Dendritic cell treated with granulocyte-macrophage colony-stimulating factor and Interleukin-4, amounts not matched to agents 40 ng/mL and 50 ng/mL, for 4 days (primary cell): ENCODE measurements at regions of chr7 and their contacts with region 1.

Region 1: GRCh38 chr7:140175221-140176121 is 1.3 kb downstream of the KDM7A start:
- H3K4me3 Mint-ChIP-seq: peak overlapping the region; percentile 76
- H3K27ac Mint-ChIP-seq: peak overlapping the region; percentile 99
- H3K4me1 Mint-ChIP-seq: peaks cover 56% of the 10 kb centered on the region
- H3K27me3 Mint-ChIP-seq: peaks cover 14% of the 10 kb centered on the region

Region 2: GRCh38 chr7:139886206-139886605 is 289.3 kb before region 1 on chr7:
- intact Hi-C with region 1: no loop called
- H3K4me3 Mint-ChIP-seq: no peak overlapping the region
- H3K27ac Mint-ChIP-seq: no peak overlapping the region
- H3K4me1 Mint-ChIP-seq: peaks cover 76% of the 10 kb centered on the region
- H3K27me3 Mint-ChIP-seq: no peaks in the 10 kb centered on the region

Region 3: DNA sequence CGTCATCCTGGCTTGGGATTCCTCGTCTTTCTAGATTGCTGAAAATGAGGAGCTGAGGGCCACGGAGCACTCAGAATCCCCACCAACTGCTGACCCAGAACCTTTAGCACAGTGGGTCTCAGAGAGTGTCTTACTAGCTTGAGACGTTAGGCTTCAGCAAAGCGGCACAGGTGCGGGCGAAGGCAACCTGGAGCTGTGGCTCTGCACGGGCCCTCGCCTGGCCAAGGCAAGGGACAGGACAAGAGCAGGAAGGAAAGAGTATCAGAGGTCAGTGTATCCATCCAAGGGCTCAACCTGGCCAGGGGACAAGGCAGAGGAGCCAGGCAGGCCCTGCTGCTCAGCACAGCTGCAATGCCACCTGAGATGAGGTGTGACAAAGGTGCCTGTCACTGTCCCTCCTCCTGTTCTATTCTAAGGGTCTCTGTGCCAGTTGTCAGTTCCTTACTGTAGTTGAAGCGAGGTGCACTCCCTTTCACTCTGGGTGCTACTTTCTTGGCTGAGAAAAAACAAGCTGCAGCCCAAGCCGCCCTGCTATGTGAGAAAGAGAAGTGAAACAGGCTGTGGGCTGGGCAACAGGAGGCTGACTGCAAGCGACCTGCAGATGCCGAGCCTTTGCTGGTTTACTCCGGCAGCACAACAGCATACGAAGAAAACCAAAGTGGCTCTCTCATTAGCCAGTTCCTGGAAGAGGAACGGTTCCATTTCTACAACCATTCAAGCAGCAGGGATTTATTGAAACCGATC is 34.6 kb after region 1 on chr7:
- intact Hi-C with region 1: loop called (anchors 2 kb)
- H3K4me3 Mint-ChIP-seq: peak overlapping the region; percentile 62
- H3K27ac Mint-ChIP-seq: peak overlapping the region; percentile 99
- H3K4me1 Mint-ChIP-seq: peaks cover 84% of the 10 kb centered on the region
- H3K27me3 Mint-ChIP-seq: peaks cover 5% of the 10 kb centered on the region

Region 4: DNA sequence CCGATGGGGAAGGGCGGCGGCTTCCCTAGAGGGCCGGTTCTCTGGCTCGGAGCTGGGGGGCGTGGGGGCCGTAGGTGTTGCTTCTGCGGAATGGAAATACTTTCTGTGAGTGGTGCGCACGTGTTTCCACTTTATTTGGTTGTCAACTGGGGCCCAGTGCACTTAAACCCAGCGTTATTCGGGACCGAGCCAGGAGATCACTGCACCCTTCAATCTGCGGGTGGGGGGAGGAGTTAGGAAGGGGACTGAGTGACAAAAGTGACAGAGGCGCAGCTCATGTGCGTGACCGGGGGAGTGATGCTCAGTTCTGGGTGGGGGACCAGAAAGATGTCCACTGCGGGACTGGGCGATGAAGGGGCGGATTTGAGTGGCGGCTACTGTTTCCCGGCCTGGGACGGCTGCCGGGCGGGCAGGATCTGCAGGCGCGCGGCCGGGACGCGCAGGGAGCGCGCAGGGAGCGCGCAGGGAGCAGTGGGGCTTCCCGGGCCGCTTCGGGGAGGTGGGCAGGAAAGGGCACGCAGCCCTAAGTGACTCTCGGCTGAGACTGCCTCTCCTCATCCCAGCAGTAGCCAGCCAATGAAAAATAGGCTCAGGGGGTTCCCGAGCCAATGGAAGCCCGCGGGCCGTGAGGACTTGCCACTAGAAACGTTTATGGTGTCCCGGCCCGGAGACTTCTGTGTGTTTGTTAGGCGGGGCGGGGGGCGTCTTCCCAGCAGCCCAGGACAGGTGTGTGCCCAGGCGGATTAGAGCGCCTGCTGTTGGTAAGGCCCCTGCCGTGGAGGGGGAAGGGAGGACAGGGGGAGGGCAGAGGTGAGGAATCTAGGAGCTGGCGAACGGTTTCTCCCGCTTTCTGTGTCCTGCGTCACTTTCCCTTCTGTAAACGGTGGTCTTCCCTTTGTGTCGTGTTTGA is 55.6 kb after region 1 on chr7:
- intact Hi-C with region 1: loop called (anchors 1 kb)
- H3K4me3 Mint-ChIP-seq: peak overlapping the region; percentile 95
- H3K27ac Mint-ChIP-seq: peak overlapping the region; percentile 97
- H3K4me1 Mint-ChIP-seq: peaks cover 56% of the 10 kb centered on the region
- H3K27me3 Mint-ChIP-seq: peaks cover 6% of the 10 kb centered on the region

Region 5: DNA sequence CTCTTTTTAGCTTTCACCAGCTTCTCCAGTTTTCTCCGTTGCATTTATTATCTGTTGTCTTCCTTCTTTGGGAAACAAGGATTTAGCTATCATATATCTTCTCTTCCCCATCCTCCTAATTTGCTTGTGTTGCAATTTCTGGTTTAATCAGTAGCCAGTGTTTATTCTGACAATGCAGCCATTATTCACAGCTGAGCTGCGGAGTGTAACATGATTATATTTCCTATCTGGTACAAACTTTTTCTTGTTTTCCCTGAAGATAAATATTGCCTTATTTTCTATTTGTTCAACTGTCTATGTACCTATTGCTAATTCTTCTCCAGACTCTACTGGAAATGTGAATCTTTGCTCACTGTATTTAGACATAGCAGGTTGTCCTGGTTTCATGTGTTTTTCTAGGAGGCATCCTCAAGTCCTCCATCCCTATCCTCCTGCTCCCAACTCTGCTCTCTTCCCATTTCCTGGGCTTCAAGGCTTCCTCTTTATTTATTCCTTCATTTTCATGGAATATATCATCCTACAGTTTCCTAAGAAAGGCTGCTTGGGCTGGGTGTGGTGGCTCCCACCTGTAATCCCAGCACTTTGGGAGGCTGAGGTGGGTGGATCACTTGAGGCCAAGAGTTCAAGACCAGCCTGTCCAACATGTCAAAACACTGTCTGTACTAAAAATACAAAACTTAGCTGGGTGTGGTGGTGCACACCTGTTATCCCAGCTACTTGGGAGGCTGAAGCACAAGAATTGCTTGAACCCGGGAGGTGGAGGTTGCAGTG is 73.8 kb after region 1 on chr7:
- intact Hi-C with region 1: loop called (anchors 1 kb)
- H3K4me3 Mint-ChIP-seq: no peak overlapping the region
- H3K27ac Mint-ChIP-seq: peak overlapping the region; percentile 95
- H3K4me1 Mint-ChIP-seq: peaks cover 64% of the 10 kb centered on the region
- H3K27me3 Mint-ChIP-seq: no peaks in the 10 kb centered on the region

Region 6: DNA sequence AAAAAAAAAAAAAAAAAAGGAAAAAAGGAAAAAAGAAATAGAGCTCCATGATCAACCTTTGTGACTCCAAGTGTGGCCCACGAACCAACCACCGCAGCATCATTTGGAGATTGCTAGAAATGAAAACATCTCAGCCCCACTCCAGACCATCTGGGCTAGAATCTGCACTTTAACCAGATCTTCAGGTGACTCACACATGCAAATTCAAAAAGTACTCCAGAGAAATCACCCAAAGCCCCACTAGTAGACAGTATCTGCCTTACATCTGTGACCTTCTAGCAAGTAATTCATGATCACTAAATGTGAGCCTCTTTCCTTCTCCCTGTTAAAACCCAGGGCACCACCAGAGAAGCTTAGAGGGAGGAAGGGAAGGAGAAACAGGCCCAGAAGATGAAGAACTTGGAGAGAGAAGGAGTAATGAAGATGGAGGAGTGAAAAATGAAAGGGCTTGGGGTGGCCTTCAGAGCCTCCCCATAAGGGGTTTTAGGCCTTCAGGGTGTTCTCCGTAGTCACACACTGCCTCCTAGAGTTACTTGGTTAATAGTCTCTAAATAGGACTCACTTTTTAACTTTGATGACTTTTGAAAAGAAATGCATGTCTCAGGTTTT is 128.8 kb after region 1 on chr7:
- intact Hi-C with region 1: loop called (anchors 5 kb)
- H3K4me3 Mint-ChIP-seq: peak overlapping the region; percentile 27
- H3K27ac Mint-ChIP-seq: peak overlapping the region; percentile 84
- H3K4me1 Mint-ChIP-seq: peaks cover 80% of the 10 kb centered on the region
- H3K27me3 Mint-ChIP-seq: no peaks in the 10 kb centered on the region

Region 7: GRCh38 chr7:140316165-140316661 is 140.7 kb after region 1 on chr7:
- intact Hi-C with region 1: loop called (anchors 2 kb)
- H3K4me3 Mint-ChIP-seq: peak overlapping the region; percentile 94
- H3K27ac Mint-ChIP-seq: peak overlapping the region; percentile 98
- H3K4me1 Mint-ChIP-seq: peaks cover 71% of the 10 kb centered on the region
- H3K27me3 Mint-ChIP-seq: no peaks in the 10 kb centered on the region